Right lobe of liver (tissue), 6 donors: ENCODE measurements at regions of chr4 and their contacts with region 1.

Region 1: DNA sequence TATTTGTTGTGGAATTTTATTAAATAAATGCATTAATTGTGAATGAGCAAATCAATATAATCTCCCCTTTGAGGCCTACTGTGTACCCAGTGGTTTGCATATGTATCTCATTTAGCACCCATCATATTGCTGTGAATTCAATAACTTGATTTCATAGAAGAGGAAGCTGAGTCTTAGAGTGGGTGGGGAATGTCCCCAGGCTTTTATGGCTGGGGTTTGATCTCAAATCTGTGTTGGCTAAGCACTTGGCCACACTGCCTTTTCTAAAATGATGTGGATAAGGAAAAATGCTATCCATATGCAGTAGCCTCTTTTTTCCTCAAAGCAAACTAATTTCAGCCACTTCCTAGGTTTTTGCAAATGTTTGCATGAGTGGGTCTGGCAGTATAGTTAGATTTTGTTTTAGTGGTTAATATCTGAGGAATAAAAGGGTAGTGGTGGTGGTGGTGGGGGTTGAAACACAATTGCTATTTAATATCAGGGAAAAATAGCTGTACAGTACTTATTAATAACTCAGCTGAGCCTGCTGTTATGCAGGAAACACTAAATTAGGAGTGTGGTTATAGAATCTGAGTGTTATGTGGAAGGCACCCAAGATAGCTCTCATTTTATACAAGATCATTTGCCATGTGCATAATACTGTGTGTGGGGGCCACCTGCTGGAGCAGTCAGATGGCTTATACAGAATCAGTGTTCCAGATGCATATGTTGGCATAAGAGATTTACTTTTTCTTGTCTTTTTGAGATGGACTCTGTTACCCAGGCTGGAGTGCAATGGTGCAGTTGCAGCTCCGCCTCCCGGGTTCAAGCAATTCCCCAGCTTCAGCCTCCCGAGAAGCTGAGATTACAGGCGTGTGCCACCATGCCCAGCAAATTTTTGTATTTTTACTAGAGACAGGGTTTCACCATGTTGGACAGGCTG is 108.0 kb downstream of the TMEM131L start:
- DNase-seq: peak; percentile 60 to 70 (median 62)
- ATAC-seq: peak; percentile 75 to 84 (median 76)
- H3K4me3 ChIP-seq: no peak overlapping the region
- H3K27ac ChIP-seq: peak overlapping the region in 2 of 3 donors; percentile 24 to 36
- H3K4me1 ChIP-seq: peaks cover 0 to 72% (median 25%) of the 10 kb centered on the region in 4 donors
- H3K27me3 ChIP-seq: no peaks in the 10 kb centered on the region
- CTCF ChIP-seq: peak; percentile 58 to 83 (median 62)
- POLR2A ChIP-seq: no peak

Region 2: DNA sequence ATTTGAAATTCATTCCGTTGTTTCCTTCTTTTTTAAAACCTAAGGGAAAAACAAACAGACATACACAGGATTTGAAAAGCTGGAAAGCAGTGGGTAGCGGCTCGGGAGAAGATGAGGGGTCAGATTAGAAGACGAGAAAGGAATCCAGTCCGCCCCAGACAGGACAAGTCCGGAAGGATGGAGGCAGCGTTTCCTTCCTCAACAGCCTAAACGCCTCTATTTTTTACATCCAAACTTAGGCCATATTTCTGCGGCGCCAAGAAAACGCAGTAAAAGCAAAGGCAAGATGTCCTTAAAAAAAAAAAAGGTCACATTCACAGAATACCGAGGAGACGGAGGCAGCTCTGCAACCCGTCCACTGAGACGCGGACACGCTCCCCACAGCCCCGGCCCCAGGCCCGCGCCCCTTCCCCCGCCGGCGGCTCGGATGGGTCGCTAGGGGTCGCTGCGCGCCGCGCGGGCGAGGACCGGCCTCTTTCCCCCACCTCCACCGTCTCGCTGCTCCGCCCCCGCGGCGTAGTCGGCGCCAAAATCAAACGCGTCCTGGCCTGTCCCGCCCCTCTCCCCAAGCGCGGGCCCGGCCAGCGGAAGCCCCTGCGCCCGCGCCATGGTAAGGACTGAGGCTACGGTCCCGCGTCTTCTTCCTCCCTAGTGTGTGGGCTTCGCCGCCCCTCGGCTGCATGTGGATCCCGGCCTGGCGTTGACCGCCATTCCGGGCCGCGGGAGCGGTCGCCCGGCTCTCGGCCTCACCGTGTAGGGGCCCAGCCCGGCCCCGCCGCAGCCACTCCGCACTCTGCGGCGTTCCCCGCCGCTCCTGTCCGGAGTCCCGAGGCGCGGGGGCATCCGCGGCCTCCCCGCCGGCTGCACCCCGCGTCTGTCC is 229.8 kb before region 1 on chr4 and contains the start of gene MND1:
- intact Hi-C with region 1: loop called in 1 of 2 experiments (anchors 5 kb)
- DNase-seq: peak; percentile 89 to 93 (median 91)
- ATAC-seq: peak; percentile 92 to 97 (median 95)
- H3K4me3 ChIP-seq: peak within 1 kb of the TSS; percentile 66 to 78 (median 77)
- H3K27ac ChIP-seq: peak within 1 kb of the TSS; percentile 59 to 88 (median 60)
- H3K4me1 ChIP-seq: peaks cover 0 to 8% (median 0%) of the 10 kb centered on the region in 4 donors
- H3K27me3 ChIP-seq: no peaks in the 10 kb centered on the region
- CTCF ChIP-seq: peak; percentile 70 to 98 (median 98)
- POLR2A ChIP-seq: no peak
- total RNA-seq, gene MND1: 0.22 to 1.8 (median 0.86) TPM in 5 of 6 experiments, not detected in the other

Region 3: GRCh38 chr4:153432968-153433753 is 141.0 kb before region 1 on chr4:
- intact Hi-C with region 1: loop called in 1 of 2 experiments (anchors 10 kb)
- DNase-seq: peak; percentile 75 to 87 (median 77)
- ATAC-seq: peak; percentile 99
- H3K4me3 ChIP-seq: peak overlapping the region in 2 of 3 donors; percentile 19 to 28
- H3K27ac ChIP-seq: peak overlapping the region; percentile 32 to 83 (median 68)
- H3K4me1 ChIP-seq: no peaks in the 10 kb centered on the region
- H3K27me3 ChIP-seq: no peaks in the 10 kb centered on the region
- CTCF ChIP-seq: peak; percentile 81 to 96 (median 86)
- POLR2A ChIP-seq: no peak

Region 4: DNA sequence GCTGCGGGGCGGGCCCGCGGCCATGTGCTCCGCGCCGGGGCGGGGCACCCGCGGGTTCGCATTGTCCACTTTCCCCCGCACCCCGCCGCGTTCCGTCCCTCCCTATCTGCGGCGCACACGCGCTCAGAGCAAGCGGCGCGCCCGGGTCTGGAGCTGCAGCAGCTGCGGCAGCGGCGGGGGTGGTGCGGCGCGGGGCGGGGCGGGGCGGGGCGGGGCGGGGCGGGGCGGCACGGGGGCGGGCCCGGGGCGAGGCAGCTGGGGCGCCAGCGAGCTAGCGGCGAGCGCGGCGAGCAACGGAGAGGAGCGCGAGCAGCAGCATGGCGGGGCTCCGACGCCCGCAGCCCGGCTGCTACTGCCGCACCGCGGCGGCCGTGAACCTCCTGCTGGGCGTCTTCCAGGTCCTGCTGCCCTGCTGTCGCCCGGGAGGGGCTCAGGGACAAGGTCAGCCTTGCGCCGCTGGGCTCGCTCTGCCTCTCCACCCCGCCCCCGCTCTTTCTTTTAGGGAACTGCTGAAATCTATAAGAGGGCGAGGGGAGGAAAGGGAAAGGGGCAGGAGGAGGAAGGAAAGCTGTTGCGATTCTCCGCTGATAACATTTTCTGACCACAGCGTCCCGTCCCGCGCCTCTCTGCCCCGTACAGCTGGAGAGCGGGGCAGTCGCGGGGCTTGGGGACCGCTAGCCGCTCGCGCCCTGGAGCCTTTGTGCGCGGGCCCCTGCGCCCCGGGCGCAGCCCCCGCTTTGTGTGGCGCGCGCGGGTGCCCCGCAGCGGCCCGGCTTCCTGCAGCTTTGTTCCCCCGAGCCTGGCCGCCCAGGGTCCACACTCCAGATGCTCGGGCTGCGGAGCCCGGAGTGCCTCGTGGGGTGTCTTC is 107.8 kb before region 1 on chr4 and contains the start of gene TMEM131L:
- intact Hi-C with region 1: loop called in 1 of 2 experiments (anchors 10 kb)
- DNase-seq: peak; percentile 86 to 93 (median 91)
- ATAC-seq: peak; percentile 66 to 80 (median 74)
- H3K4me3 ChIP-seq: peak within 1 kb of the TSS; percentile 83 to 90 (median 86)
- H3K27ac ChIP-seq: peak within 1 kb of the TSS; percentile 81 to 94 (median 92)
- H3K4me1 ChIP-seq: peaks cover 0 to 30% (median 11%) of the 10 kb centered on the region in 4 donors
- H3K27me3 ChIP-seq: no peaks in the 10 kb centered on the region
- CTCF ChIP-seq: peak in 2 of 4 donors; percentile 18 to 37
- POLR2A ChIP-seq: peak; percentile 78
- total RNA-seq, gene TMEM131L: 13.2 to 19.6 (median 14.8) TPM